GM23248 (cell line): ENCODE measurements at regions of chr9 and their contacts with region 1.

Region 1: GRCh38 chr9:135085830-135086546 is 1.5 kb upstream of the OLFM1 start:
- DNase-seq: peak; percentile 86
- H3K4me3 ChIP-seq: peak overlapping the region; percentile 73
- H3K27ac ChIP-seq: no peak overlapping the region
- H3K4me1 ChIP-seq: 0 out of 2 replicates have a peak, but pooled peaks cover 5% of the 10 kb centered on the region
- H3K27me3 ChIP-seq: peaks cover 10% of the 10 kb centered on the region

Region 2: DNA sequence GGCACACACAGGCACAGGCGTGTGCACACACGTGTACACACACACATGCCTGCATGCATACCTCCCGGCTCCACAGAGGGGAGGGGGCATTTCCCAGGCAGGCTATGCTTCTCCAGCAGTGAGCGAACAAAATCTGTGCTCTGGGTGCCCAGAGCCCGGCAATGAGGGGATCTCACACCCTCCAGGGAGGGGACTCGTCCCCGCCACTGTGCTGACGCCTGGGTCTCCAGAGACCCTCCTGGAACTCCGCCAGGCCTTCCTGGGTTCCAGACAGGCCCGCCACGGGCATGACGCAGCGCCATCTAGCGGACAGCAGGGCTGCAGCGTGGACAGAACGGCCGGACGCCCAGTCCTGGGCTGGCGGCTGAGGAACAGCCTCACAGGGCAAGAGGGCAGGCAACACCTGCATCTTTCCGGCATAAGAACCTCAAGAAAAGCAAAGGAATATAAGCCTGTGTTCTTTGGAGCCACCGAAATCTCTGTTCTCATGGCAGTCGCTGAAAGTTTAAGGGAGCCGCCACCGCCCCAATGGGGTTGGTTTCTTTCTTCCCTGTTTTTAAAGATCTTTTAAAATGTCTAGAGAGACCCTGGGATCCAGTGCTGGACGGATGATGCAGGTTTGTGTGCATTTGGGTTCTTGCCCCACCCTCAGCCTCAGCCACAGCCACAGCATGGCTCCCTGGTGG is 258.0 kb after region 1 on chr9:
- in situ Hi-C with region 1: loop called (anchors 10 kb)
- DNase-seq: peak; percentile 57
- H3K4me3 ChIP-seq: no peak overlapping the region
- H3K27ac ChIP-seq: no peak overlapping the region
- H3K4me1 ChIP-seq: no peaks in the 10 kb centered on the region
- H3K27me3 ChIP-seq: peaks cover 32% of the 10 kb centered on the region; the same call in 1 of the 2 replicates

Region 3: GRCh38 chr9:135403813-135404695 is 318.1 kb after region 1 on chr9:
- in situ Hi-C with region 1: loop called (anchors 10 kb)
- DNase-seq: no peak
- H3K4me3 ChIP-seq: no peak overlapping the region
- H3K27ac ChIP-seq: no peak overlapping the region
- H3K4me1 ChIP-seq: no peaks in the 10 kb centered on the region
- H3K27me3 ChIP-seq: peaks cover 16% of the 10 kb centered on the region